ENCODE measurements at regions of chr11 and their contacts with region 1.

Region 1: DNA sequence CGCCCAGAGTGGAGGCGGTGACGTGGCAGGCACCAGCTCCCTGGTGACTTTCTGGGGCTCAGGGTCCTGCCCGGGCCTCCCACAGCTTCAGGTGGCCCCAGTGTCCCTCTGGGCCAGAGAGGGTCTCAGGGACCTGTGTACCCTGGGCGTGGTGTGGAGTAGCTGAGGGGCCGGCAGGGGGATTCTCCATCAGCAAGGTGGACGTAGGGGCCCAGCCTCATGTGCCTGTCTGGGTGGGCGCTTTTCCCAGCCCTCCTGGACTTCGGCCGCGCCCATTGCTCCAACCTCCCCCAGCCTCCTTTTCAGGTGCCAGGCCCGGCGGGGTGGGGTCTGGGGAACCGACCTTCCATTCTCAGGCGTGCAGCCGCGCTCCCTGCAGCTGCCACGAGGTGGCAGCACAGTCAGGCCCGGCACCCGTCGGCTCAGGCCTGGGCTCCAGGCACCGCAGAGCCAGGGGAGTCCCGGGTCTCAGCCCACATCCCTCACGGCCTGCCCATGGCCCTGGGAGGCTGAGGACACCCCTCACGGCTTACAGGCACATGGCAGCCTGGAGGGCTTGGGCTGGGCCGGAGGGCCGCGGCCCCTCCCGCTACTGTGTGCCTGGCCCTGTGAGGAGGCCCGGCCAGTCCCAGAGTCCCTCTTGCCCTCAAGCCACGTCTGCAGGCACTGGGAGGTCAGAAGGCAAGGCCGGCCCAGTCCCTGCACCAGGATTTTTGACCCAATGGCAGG is 19.9 kb upstream of the MUC5B start:
- DNase-seq: peak; percentile 60
- ATAC-seq: peak; percentile 72 to 79

Region 2: DNA sequence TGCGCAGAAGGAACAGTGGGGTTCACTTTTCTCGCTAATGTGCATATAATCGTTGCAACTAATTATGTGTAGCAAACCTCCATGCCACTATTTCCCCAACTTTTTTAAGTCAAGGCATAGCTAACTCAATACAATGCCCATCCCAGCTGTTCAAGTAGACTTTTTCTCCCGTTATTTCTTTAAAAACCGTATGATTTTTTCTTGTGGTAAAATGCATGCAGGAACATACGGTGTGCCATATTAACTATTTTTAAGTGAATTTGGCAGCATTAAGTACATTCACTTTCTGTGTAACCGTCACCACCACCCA is 371.9 kb after region 1 on chr11:
- intact Hi-C with region 1: loop called in 1 of 2 experiments (anchors 2 kb)
- DNase-seq: no peak
- ATAC-seq: no peak

Measured in left cardiac atrium (tissue), 4 donors.